PC-3 (cell line): ENCODE measurements at regions of chr14 and their contacts with region 1.

Region 1: DNA sequence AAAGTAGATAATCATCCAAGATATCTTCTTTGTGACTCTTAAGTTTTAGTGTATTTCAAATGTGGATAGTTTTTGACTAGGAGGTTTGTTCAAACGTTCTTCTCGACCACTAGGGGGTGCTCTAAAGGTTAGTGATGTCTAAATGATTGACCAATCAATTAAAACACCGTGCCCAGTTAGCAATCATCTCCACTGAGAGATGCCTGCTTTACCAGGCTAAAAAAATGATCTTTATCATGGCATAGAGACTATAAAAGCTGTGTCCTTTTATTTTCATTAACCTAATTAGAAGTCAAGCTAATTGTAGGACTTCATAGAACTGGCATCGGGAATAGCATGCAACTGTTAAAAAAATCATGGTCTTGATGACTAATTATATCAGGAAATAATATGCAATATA is 153.9 kb downstream of the PRKCH start:
- DNase-seq: peak; percentile 89
- ATAC-seq: no peak
- H3K4me3 ChIP-seq: no peak overlapping the region
- H3K27ac ChIP-seq: peak overlapping the region; percentile 40
- H3K4me1 ChIP-seq: peaks cover 84% of the 10 kb centered on the region
- H3K27me3 ChIP-seq: no peaks in the 10 kb centered on the region
- CTCF ChIP-seq: peak; percentile 97

Region 2: DNA sequence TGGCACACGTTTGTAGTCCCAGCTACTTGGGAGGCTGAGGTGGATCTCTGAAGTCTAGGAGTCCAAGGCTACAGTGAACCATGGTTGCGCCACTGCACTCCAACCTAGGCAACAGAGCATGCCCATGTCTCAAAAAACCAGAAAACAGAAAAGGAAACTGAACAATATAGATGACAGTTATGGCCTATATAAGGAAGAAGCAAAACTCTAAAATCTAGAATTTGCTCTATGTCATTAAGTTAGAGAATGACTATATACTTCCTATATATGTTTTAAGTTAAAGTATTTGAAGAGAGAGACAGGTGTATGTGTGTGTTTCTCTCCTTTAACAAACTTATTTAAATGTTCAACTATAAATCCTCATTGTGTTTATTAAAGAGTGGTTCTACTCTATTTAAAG is 674.9 kb before region 1 on chr14:
- CTCF ChIA-PET with region 1: no interaction called
- POLR2A ChIA-PET with region 1: no interaction called
- intact Hi-C with region 1: no loop called
- DNase-seq: no peak
- ATAC-seq: no peak
- H3K4me3 ChIP-seq: no peak overlapping the region
- H3K27ac ChIP-seq: no peak overlapping the region
- H3K4me1 ChIP-seq: peaks cover 3% of the 10 kb centered on the region; the same call in 1 of the 2 replicates
- H3K27me3 ChIP-seq: no peaks in the 10 kb centered on the region
- CTCF ChIP-seq: no peak

Region 3: DNA sequence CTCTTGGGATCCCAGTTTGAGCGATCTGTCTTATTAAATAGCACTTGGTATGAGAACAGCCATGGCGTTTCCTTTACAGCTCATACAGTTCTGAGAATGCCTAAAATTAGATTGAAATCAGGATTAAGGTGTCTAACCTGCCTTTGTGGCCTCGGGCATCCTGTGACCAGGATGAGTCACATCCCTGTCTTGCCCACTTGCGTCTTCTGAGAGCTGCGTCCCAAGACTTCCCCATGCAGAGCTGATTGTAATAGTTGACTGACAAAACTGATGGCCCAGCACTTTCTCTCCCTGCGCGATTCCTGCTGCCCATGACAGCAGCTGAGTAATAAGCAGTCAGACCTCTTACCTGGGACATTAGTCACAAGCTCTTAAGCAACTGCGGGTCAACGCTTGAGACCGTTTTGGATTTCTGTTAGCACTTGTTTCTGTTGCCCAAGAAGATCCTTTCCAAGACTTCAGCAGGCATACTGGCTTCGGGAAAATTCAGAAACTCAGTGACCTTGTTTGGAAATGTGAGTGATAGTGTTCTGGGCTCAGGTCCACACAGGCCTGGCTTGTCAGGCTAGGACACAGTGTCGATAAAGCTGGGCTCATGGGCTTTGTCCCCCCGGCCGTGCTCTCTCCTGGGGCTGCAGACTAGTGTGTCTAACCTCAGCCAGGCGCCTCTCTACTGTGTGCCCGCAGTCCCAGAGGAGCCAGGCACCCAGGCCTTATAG is 50.1 kb after region 1 on chr14:
- CTCF ChIA-PET with region 1: interaction called, 7 read pairs
- POLR2A ChIA-PET with region 1: interaction called, 9 read pairs
- intact Hi-C with region 1: loop called (anchors 1 kb)
- DNase-seq: peak; percentile 100
- ATAC-seq: peak; percentile 73
- H3K4me3 ChIP-seq: peak overlapping the region; percentile 27; the same call in 1 of the 2 replicates
- H3K27ac ChIP-seq: peak overlapping the region; percentile 95
- H3K4me1 ChIP-seq: peaks cover 66% of the 10 kb centered on the region
- H3K27me3 ChIP-seq: no peaks in the 10 kb centered on the region
- CTCF ChIP-seq: no peak

Region 4: GRCh38 chr14:61553725-61554641 is 78.7 kb after region 1 on chr14:
- CTCF ChIA-PET with region 1: interaction called, 7 read pairs
- POLR2A ChIA-PET with region 1: no interaction called
- intact Hi-C with region 1: loop called (anchors 1 kb)
- DNase-seq: peak; percentile 100
- ATAC-seq: peak; percentile 92
- H3K4me3 ChIP-seq: no peak overlapping the region; the same call in 1 of the 2 replicates
- H3K27ac ChIP-seq: peak overlapping the region; percentile 95
- H3K4me1 ChIP-seq: peaks cover 65% of the 10 kb centered on the region
- H3K27me3 ChIP-seq: no peaks in the 10 kb centered on the region
- CTCF ChIP-seq: no peak

Region 5: DNA sequence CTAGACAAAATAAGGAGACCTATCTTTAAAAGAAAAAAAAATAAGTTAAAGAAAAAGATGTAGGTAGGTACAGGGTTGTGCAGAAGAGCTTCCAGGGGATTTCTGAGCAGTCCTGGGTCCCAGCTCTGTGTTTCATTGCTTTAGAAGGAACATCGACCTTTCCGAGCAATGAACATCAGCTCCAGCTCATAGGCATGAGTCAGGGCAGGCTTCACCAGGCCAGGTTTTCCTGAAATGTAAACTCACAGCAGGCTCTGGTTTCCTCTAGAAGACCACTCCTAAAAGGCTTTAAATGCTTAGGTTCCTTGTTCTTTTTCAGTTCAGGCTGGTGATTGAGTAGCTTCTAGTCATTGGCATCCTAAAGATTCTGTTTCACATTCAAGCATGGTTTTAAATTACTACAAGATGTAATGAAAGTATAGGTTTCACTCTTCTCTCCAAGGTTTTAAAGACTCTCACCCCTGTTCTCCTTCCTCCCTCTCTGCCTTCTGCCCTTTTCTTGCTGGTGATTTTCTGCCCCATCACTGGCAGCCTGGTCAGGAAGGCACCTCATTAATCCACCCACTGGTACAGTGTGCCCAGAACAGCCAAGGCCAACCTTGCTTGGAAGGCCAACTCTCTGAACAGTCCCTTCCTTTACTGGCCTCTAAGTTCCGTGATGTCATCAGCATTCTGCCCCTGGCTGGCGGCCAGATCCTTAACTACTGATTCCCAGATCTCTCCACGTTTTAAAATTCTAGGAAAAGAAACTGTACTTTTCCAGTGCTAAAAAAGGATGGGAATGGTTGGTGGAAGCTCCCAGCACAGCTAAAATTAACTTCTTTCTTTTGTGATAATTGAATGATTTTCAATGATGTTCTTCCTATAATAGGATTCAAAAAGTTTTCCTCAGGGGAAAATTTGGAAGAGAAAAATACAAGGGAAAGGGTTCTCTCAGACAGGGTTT is 110.6 kb after region 1 on chr14:
- CTCF ChIA-PET with region 1: no interaction called
- POLR2A ChIA-PET with region 1: no interaction called
- intact Hi-C with region 1: no loop called
- DNase-seq: peak; percentile 79
- ATAC-seq: peak; percentile 62
- H3K4me3 ChIP-seq: peak overlapping the region; percentile 9; the same call in 1 of the 2 replicates
- H3K27ac ChIP-seq: peak overlapping the region; percentile 93
- H3K4me1 ChIP-seq: peaks cover 34% of the 10 kb centered on the region
- H3K27me3 ChIP-seq: no peaks in the 10 kb centered on the region
- CTCF ChIP-seq: no peak

Region 6: GRCh38 chr14:61620130-61620946 is 145.0 kb after region 1 on chr14:
- CTCF ChIA-PET with region 1: no interaction called
- POLR2A ChIA-PET with region 1: no interaction called
- intact Hi-C with region 1: no loop called
- DNase-seq: peak; percentile 56
- ATAC-seq: peak; percentile 85
- H3K4me3 ChIP-seq: no peak overlapping the region
- H3K27ac ChIP-seq: peak overlapping the region; percentile 50
- H3K4me1 ChIP-seq: peaks cover 51% of the 10 kb centered on the region
- H3K27me3 ChIP-seq: no peaks in the 10 kb centered on the region
- CTCF ChIP-seq: no peak

Region 7: GRCh38 chr14:61644834-61645233 is 169.5 kb after region 1 on chr14:
- CTCF ChIA-PET with region 1: no interaction called
- POLR2A ChIA-PET with region 1: interaction called, 3 read pairs
- intact Hi-C with region 1: loop called (anchors 1 kb)
- DNase-seq: peak; percentile 53
- ATAC-seq: peak; percentile 34
- H3K4me3 ChIP-seq: no peak overlapping the region
- H3K27ac ChIP-seq: no peak overlapping the region
- H3K4me1 ChIP-seq: peaks cover 53% of the 10 kb centered on the region
- H3K27me3 ChIP-seq: no peaks in the 10 kb centered on the region
- CTCF ChIP-seq: no peak

Region 8: GRCh38 chr14:61662437-61663311 is 187.4 kb after region 1 on chr14:
- CTCF ChIA-PET with region 1: no interaction called
- POLR2A ChIA-PET with region 1: no interaction called
- intact Hi-C with region 1: loop called (anchors 2 kb)
- DNase-seq: peak; percentile 99
- ATAC-seq: peak; percentile 81
- H3K4me3 ChIP-seq: peak overlapping the region; percentile 34; the same call in 1 of the 2 replicates
- H3K27ac ChIP-seq: peak overlapping the region; percentile 89
- H3K4me1 ChIP-seq: peaks cover 60% of the 10 kb centered on the region
- H3K27me3 ChIP-seq: no peaks in the 10 kb centered on the region
- CTCF ChIP-seq: no peak

Region 9: GRCh38 chr14:61710853-61711817 is 235.8 kb after region 1 on chr14:
- CTCF ChIA-PET with region 1: no interaction called
- POLR2A ChIA-PET with region 1: no interaction called
- intact Hi-C with region 1: loop called (anchors 5 kb)
- DNase-seq: peak; percentile 82
- ATAC-seq: peak; percentile 87
- H3K4me3 ChIP-seq: no peak overlapping the region; the same call in 1 of the 2 replicates
- H3K27ac ChIP-seq: peak overlapping the region; percentile 38
- H3K4me1 ChIP-seq: peaks cover 51% of the 10 kb centered on the region
- H3K27me3 ChIP-seq: no peaks in the 10 kb centered on the region
- CTCF ChIP-seq: no peak